Breast epithelium (tissue), 4 donors: ENCODE measurements at regions of chr11 and their contacts with region 1.

Region 1: GRCh38 chr11:103730131-103730940 is 306.1 kb upstream of the DDI1 start:
- DNase-seq: no peak
- H3K4me3 ChIP-seq: no peak overlapping the region
- H3K27ac ChIP-seq: no peak overlapping the region
- H3K4me1 ChIP-seq: peaks cover 0 to under 1% of the 10 kb centered on the region in 2 donors
- H3K27me3 ChIP-seq: no peaks in the 10 kb centered on the region
- CTCF ChIP-seq: no peak
- POLR2A ChIP-seq: no peak

Region 2: DNA sequence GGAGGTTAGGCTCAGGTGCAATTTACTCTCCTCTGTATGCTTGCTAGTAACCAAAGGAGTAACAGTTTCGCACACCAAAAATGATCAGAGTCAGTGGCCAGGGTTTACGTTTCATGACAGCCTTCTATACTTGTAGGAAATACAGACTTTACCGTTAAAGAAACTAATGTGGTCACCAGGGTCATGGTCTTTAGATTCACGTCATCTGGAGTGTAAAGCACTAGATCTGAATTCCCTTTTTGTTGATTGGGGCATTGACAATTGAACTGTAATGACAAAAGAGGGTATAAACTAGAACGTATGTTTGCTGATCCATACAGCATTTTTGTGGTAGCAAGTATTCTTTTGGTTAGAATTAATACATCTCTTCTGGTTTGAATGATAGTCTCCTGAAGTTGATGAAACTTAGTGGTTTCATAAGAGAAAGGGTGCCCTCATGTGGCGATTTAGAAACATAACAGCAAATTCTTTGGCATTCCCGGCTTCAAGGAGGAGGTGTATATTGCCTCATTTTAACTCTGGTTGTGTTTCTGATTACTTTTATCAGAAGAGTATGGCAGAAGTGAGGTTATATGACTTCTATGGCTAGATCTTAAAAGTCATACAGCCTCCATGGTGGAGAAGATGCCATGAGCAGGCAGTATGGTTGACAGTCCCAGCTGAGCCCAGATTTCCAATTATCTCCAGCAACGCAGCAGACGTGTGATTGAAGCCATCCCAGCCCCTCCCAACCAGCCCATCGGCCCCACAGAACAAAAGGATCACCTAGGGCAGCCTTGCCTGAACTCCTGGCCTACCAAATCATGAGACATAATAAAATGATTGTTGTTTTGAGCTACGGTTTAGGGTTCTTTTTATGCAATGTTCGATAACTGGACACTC is 1234.9 kb before region 1 on chr11:
- intact Hi-C with region 1: loop called (anchors 10 kb)
- DNase-seq: no peak
- H3K4me3 ChIP-seq: no peak overlapping the region
- H3K27ac ChIP-seq: no peak overlapping the region
- H3K4me1 ChIP-seq: peaks cover 0 to 4% of the 10 kb centered on the region in 2 donors
- H3K27me3 ChIP-seq: no peaks in the 10 kb centered on the region
- CTCF ChIP-seq: peak; percentile 69 to 84 (median 78)
- POLR2A ChIP-seq: no peak

Region 3: DNA sequence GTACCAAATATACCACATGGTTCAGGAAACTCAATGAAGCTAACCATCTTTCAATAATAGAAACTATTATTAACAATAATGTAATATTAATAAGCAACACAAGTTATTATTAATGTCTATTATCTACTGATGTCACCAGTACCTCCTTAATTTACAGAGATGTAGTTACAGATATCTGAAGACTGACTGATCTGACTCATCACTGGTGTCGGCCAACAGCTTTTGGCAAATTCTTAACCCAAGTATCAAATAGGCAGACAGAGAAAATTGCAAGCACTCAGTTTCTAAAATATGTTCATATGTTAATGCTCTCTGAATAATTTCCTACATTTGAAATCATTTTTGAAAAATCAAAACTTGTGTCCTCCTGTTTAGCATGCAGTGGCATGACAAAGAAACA is 205.7 kb after region 1 on chr11:
- intact Hi-C with region 1: no loop called
- DNase-seq: no peak
- H3K4me3 ChIP-seq: no peak overlapping the region
- H3K27ac ChIP-seq: no peak overlapping the region
- H3K4me1 ChIP-seq: no peaks in the 10 kb centered on the region
- H3K27me3 ChIP-seq: no peaks in the 10 kb centered on the region
- CTCF ChIP-seq: no peak
- POLR2A ChIP-seq: no peak

Region 4: GRCh38 chr11:104301776-104302175 is 571.4 kb after region 1 on chr11:
- intact Hi-C with region 1: no loop called
- DNase-seq: no peak
- H3K4me3 ChIP-seq: no peak overlapping the region
- H3K27ac ChIP-seq: no peak overlapping the region
- H3K4me1 ChIP-seq: no peaks in the 10 kb centered on the region
- H3K27me3 ChIP-seq: no peaks in the 10 kb centered on the region
- CTCF ChIP-seq: no peak
- POLR2A ChIP-seq: no peak